ENCODE measurements at regions of chr15 and their contacts with region 1.

Region 1: DNA sequence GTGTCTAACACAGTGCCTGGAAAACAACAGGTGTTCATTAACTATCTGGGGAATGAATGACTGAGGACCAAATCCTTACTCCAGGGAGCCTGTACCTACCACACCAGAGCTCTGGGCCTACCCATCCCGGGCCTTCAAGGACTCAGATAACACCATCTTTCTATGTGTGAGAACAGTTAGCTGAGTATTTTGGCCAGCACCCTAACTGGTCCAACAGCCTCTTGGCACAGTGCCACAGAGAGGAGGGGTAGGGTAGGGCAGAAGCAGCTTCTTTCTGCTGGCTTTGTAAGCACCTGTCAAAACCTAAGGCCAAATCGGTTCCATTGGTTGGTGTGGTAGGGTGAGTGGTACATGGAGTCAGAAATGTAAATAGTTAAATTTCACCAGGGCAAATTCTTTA is 26.7 kb downstream of the ISL2 start:
- DNase-seq: no peak
- H3K4me3 ChIP-seq: no peak overlapping the region
- CTCF ChIP-seq: no peak
- POLR2A ChIP-seq: no peak

Region 2: GRCh38 chr15:76024021-76024768 is 339.0 kb before region 1 on chr15:
- intact Hi-C with region 1: no loop called
- DNase-seq: no peak
- H3K4me3 ChIP-seq: no peak overlapping the region
- CTCF ChIP-seq: no peak
- POLR2A ChIP-seq: no peak

Region 3: DNA sequence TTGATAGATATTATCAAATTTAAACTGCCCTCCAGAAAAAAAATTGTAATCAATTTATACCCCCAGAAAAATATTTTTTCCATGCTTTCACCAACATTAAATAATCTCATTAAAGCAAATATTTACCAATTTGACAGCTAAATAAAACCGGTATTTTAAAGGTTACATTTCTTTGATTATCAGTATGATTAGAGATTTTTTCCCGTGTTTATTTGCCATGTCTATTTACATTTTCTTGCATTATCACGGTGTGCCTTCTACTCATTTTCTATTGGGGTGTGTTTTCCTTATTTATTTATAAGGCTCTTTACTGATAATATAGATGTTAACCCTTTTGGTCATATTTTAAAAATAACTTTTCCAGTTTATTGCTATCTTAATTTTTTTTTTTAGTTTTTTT is 114.3 kb after region 1 on chr15:
- intact Hi-C with region 1: loop called (anchors 5 kb)
- DNase-seq: no peak
- H3K4me3 ChIP-seq: no peak overlapping the region
- CTCF ChIP-seq: no peak
- POLR2A ChIP-seq: no peak